MCF 10A (cell line): ENCODE measurements at regions of chr14 and their contacts with region 1.

Region 1: DNA sequence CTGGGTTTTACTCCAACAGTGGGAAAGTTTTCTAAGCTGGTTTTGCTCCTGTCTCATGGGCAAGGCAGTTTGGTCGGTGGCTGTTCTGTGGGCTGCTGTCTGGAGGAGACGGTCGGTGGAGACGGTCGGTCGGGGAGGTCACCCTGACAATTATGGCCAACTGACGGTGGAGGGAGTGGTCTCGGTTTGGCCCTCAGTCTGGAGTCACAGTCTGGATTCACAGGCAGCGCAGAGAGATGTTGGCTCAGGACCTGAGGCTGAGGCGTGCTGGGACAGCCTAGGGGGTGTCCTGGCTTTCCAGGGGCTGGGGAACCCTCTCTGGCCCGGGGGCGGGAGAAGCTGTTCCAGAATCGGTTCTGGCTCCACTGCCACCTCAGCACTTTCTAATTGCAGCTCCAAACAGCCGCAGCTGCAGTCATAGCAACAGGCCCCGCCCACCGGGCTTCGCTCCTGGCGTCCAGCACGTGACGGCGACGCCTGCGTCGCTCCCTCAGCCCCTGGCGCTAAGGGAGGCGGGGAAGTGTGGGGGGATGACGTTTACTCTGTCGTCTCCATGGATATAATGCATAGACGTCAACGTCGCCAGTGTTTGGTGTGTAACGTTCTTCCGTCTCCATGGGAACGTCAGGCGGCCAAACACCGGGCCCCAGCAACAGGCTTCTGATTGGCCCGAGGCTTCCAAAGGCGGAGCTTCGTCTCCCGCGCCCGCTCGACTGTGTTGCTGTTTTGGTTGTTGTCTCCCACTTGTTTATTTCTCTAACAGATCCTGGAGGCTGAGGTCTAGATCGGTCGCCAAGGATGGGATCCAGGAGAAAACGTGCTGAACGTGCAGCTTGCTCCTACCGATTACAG is 19.8 kb upstream of the FOS start:
- DNase-seq: peak; percentile 99
- H3K4me3 Mint-ChIP-seq: peak overlapping the region; percentile 67
- H3K27ac Mint-ChIP-seq: peak overlapping the region; percentile 100
- H3K4me1 Mint-ChIP-seq: peaks cover 40% of the 10 kb centered on the region
- H3K27me3 Mint-ChIP-seq: no peaks in the 10 kb centered on the region
- CTCF ChIP-seq: no peak

Region 2: DNA sequence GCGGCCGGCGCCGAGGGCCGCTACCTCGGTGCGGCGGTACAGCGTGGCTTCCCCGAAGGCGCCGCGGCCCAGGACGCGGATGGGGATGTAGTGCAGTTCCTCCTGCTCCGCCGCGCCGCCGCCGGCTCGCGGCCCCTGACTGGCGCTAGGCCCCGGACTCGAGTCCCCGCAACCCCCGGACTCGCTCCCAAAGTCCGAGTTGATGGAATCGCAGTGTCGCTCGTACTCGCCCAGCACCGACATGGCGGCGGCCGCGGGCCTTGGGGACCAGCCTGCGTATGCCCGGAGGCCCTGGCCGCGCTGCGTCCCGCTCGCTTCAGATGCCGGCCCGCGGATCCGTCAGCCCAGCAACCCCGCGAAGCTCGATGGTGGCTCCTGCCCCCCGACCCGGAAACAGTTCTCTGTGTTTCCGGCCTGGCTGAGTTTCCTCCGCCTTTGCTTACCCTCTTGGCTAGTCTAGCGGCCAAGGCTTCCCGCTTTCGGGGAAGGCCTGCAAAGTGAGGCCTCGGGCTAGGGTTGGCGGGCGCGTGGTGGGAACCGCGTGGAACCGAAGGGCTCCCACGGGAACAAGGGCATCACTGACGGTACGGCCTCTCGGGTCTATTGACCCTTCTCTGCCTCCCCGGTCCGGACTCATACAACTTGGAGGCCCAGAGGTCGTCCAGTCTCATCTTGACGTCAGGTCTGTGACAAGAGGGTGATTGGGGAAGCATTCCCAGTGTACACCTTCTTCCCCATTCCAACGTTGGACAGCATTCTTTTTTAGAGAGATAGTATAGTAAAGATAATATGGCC is 132.0 kb before region 1 on chr14 and contains the start of gene NEK9:
- CTCF ChIA-PET with region 1: interaction called, 3 read pairs
- POLR2A ChIA-PET with region 1: interaction called, 85 read pairs
- intact Hi-C with region 1: no loop called
- DNase-seq: peak; percentile 88
- H3K4me3 Mint-ChIP-seq: peak within 1 kb of the TSS; percentile 72
- H3K27ac Mint-ChIP-seq: peak within 1 kb of the TSS; percentile 99
- H3K4me1 Mint-ChIP-seq: peaks cover 33% of the 10 kb centered on the region
- H3K27me3 Mint-ChIP-seq: no peaks in the 10 kb centered on the region
- CTCF ChIP-seq: no peak
- total RNA-seq, gene NEK9: 112 and 113 TPM in 2 replicates

Region 3: GRCh38 chr14:75176142-75176820 is 82.6 kb before region 1 on chr14 and contains the start of gene TMED10:
- CTCF ChIA-PET with region 1: no interaction called
- POLR2A ChIA-PET with region 1: interaction called, 60 read pairs
- intact Hi-C with region 1: loop called (anchors 1 kb)
- DNase-seq: peak; percentile 93
- H3K4me3 Mint-ChIP-seq: peak within 1 kb of the TSS; percentile 98
- H3K27ac Mint-ChIP-seq: peak within 1 kb of the TSS; percentile 99
- H3K4me1 Mint-ChIP-seq: peaks cover 22% of the 10 kb centered on the region
- H3K27me3 Mint-ChIP-seq: no peaks in the 10 kb centered on the region
- CTCF ChIP-seq: no peak
- total RNA-seq, gene TMED10: 454 and 526 TPM in 2 replicates

Region 4: GRCh38 chr14:75205591-75205990 is 53.2 kb before region 1 on chr14:
- CTCF ChIA-PET with region 1: interaction called, 8 read pairs
- POLR2A ChIA-PET with region 1: interaction called, 18 read pairs
- intact Hi-C with region 1: no loop called
- DNase-seq: peak; percentile 12
- H3K4me3 Mint-ChIP-seq: no peak overlapping the region
- H3K27ac Mint-ChIP-seq: no peak overlapping the region
- H3K4me1 Mint-ChIP-seq: peaks cover 20% of the 10 kb centered on the region
- H3K27me3 Mint-ChIP-seq: no peaks in the 10 kb centered on the region
- CTCF ChIP-seq: no peak

Region 5: GRCh38 chr14:75230140-75231045 is 28.4 kb before region 1 on chr14:
- CTCF ChIA-PET with region 1: interaction called, 4 read pairs
- POLR2A ChIA-PET with region 1: interaction called, 35 read pairs
- intact Hi-C with region 1: loop called (anchors 1 kb)
- DNase-seq: peak; percentile 98
- H3K4me3 Mint-ChIP-seq: peak overlapping the region; percentile 45
- H3K27ac Mint-ChIP-seq: peak overlapping the region; percentile 94
- H3K4me1 Mint-ChIP-seq: peaks cover 44% of the 10 kb centered on the region
- H3K27me3 Mint-ChIP-seq: no peaks in the 10 kb centered on the region
- CTCF ChIP-seq: peak; percentile 29

Region 6: GRCh38 chr14:75293920-75294642 is 35.2 kb after region 1 on chr14:
- CTCF ChIA-PET with region 1: interaction called, 7 read pairs
- POLR2A ChIA-PET with region 1: interaction called, 258 read pairs
- intact Hi-C with region 1: loop called (anchors 2 kb)
- DNase-seq: peak; percentile 96
- H3K4me3 Mint-ChIP-seq: peak overlapping the region; percentile 67
- H3K27ac Mint-ChIP-seq: peak overlapping the region; percentile 71
- H3K4me1 Mint-ChIP-seq: peaks cover 22% of the 10 kb centered on the region
- H3K27me3 Mint-ChIP-seq: no peaks in the 10 kb centered on the region
- CTCF ChIP-seq: no peak